ENCODE measurements at regions of chr12 and their contacts with region 1.

Region 1: GRCh38 chr12:65169320-65170208 is at the start of gene LEMD3:
- DNase-seq: peak; percentile 97
- total RNA-seq, gene LEMD3: 17.2 TPM

Region 2: GRCh38 chr12:64403707-64404469 is 765.7 kb before region 1 on chr12 and contains the start of gene XPOT:
- intact Hi-C with region 1: loop called (anchors 10 kb)
- DNase-seq: peak; percentile 97
- total RNA-seq, gene XPOT: 30.6 TPM

Region 3: DNA sequence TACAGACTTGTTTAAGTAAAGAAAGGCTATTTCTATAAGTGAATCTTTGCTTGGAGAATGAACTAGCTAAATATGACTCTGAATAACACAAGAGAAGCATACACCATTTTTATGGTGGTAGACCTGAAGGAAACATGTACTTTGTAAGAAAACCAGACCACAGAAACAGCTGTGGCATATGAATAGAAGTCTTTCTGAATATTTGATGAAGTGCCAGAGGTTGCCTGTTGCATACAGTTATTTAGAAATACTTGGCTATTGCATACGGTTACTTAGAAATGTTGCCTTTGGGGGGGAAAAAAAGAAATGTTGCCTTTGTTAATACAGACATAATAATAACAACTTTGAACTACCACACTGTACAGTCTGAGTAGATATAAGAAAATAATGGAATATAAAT is 17.0 kb before region 1 on chr12:
- intact Hi-C with region 1: no loop called
- DNase-seq: no peak

Region 4: DNA sequence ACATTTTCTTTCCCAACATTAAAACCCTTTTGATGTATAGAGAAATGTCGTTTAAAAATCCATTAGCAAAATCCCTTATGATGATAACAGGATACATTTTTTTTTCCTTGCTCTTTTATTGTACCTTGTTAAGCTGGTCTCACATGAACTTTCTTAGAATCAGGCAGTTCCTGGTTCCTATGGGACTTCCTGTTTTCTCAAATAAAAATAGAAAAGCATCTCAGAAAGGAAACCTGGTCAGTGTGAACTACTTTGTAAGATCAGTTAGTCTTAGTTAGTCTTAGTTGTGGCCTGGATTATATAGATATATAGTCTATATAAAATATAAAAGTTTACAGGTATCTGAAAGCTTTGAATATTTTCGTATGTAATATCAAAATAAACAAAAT is 40.1 kb after region 1 on chr12:
- intact Hi-C with region 1: loop called (anchors 5 kb)
- DNase-seq: no peak

Region 5: DNA sequence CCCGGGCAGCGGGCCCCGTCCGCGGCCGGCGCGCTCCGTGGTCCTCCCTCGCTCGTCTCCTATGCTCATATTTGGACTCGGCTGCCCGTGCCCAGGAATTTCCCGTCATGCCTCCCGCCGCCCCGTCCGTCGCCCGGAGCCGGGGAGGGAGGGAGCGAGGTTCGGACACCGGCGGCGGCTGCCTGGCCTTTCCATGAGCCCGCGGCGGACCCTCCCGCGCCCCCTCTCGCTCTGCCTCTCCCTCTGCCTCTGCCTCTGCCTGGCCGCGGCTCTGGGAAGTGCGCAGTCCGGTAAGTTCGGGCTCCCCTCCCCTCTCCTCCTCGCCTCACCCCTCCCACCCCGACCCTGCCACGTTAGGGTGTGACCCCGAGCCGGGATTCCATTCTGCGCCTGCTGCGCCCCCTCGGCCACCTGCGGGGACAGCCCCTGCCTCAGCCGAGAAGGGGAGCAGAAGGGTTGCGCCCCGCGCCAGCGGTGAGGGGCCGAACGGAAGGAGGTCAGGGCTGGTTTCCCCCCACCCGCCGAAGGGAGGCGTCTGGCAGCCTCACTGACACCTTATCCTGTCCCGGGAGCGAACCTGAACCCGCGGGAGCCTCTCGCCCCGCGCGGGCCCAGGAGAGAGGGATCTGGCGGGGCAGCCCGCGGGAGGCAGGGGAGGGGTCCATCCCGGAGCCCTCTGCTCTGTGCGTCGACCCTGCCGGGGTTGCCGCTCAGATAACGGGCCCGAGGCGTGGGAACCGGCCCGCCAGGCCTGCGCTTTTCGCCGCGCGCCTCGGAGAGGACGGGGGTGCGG is 109.2 kb after region 1 on chr12 and contains the start of gene MSRB3:
- intact Hi-C with region 1: loop called (anchors 5 kb)
- DNase-seq: peak; percentile 91
- total RNA-seq, gene MSRB3: 166 TPM